Vagina (tissue), 2 donors: ENCODE measurements at regions of chr1 and their contacts with region 1.

Region 1: GRCh38 chr1:175090780-175091179 is 23.1 kb downstream of the TNN start:
- DNase-seq: no peak
- H3K4me3 ChIP-seq: no peak overlapping the region
- H3K27ac ChIP-seq: no peak overlapping the region
- H3K4me1 ChIP-seq: no peaks in the 10 kb centered on the region
- H3K27me3 ChIP-seq: no peaks in the 10 kb centered on the region
- CTCF ChIP-seq: no peak
- POLR2A ChIP-seq: no peak

Region 2: GRCh38 chr1:176638713-176639526 is 1548.1 kb after region 1 on chr1:
- intact Hi-C with region 1: loop called (anchors 10 kb)
- DNase-seq: no peak
- H3K4me3 ChIP-seq: no peak overlapping the region
- H3K27ac ChIP-seq: no peak overlapping the region
- H3K4me1 ChIP-seq: no peaks in the 10 kb centered on the region
- H3K27me3 ChIP-seq: no peaks in the 10 kb centered on the region
- CTCF ChIP-seq: no peak
- POLR2A ChIP-seq: no peak